ENCODE measurements at regions of chr5 and their contacts with region 1.

Region 1: GRCh38 chr5:39714036-39714698 is 289.4 kb upstream of the DAB2 start:
- DNase-seq: peak; percentile 3
- ATAC-seq: peak; percentile 63
- H3K4me3 ChIP-seq: no peak overlapping the region
- H3K27ac ChIP-seq: no peak overlapping the region
- H3K4me1 ChIP-seq: no peaks in the 10 kb centered on the region
- H3K27me3 ChIP-seq: no peaks in the 10 kb centered on the region
- CTCF ChIP-seq: peak; percentile 49 to 53 (median 52)
- EP300 ChIP-seq: no peak
- POLR2A ChIP-seq: no peak
- RAD21 ChIP-seq: peak; percentile 87

Region 2: GRCh38 chr5:39783756-39784421 is 69.7 kb after region 1 on chr5:
- CTCF ChIA-PET with region 1: no interaction called
- POLR2A ChIA-PET with region 1: no interaction called
- RAD21 ChIA-PET with region 1: no interaction called
- SMC1A ChIA-PET with region 1: no interaction called
- in situ Hi-C with region 1: no loop called
- intact Hi-C with region 1: no loop called
- DNase-seq: no peak
- ATAC-seq: no peak; the same call in 2 of the 3 replicates
- H3K4me3 ChIP-seq: no peak overlapping the region
- H3K27ac ChIP-seq: no peak overlapping the region
- H3K4me1 ChIP-seq: no peaks in the 10 kb centered on the region
- H3K27me3 ChIP-seq: no peaks in the 10 kb centered on the region
- CTCF ChIP-seq: no peak
- EP300 ChIP-seq: no peak
- POLR2A ChIP-seq: no peak
- RAD21 ChIP-seq: no peak

Region 3: GRCh38 chr5:39811381-39811780 is 97.2 kb after region 1 on chr5:
- CTCF ChIA-PET with region 1: no interaction called
- POLR2A ChIA-PET with region 1: no interaction called
- RAD21 ChIA-PET with region 1: no interaction called
- SMC1A ChIA-PET with region 1: no interaction called
- in situ Hi-C with region 1: no loop called
- intact Hi-C with region 1: no loop called
- DNase-seq: no peak
- ATAC-seq: no peak
- H3K4me3 ChIP-seq: no peak overlapping the region
- H3K27ac ChIP-seq: no peak overlapping the region
- H3K4me1 ChIP-seq: no peaks in the 10 kb centered on the region
- H3K27me3 ChIP-seq: no peaks in the 10 kb centered on the region
- CTCF ChIP-seq: no peak
- EP300 ChIP-seq: no peak
- POLR2A ChIP-seq: no peak
- RAD21 ChIP-seq: no peak

Region 4: DNA sequence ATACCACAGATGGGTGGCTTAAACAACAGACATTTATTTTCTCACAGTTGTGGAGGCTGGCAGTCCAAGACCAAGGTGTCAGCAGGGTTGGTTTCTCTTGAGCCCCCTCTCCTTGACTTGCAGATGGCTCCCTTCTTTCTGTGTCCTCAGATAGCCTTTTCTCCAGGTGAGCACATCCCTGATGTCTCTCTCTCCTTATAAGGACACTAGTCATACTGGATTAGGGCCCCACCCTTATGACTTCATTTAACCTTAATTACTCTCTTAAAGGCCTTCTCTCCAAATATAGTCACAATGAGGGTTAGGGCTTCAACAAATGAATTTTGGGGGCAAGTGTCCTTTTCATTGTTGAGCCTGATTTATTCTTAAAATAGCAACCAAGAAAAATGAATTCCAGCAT is 980.3 kb after region 1 on chr5:
- CTCF ChIA-PET with region 1: interaction called, 23 read pairs
- POLR2A ChIA-PET with region 1: no interaction called
- RAD21 ChIA-PET with region 1: interaction called, 7 read pairs
- SMC1A ChIA-PET with region 1: interaction called, 6 read pairs
- in situ Hi-C with region 1: loop called (anchors 10 kb)
- intact Hi-C with region 1: no loop called
- DNase-seq: no peak
- ATAC-seq: no peak
- H3K4me3 ChIP-seq: no peak overlapping the region
- H3K27ac ChIP-seq: no peak overlapping the region
- H3K4me1 ChIP-seq: no peaks in the 10 kb centered on the region
- H3K27me3 ChIP-seq: no peaks in the 10 kb centered on the region
- CTCF ChIP-seq: no peak
- EP300 ChIP-seq: no peak
- POLR2A ChIP-seq: no peak
- RAD21 ChIP-seq: no peak

Region 5: GRCh38 chr5:40736103-40736875 is 1022.1 kb after region 1 on chr5:
- CTCF ChIA-PET with region 1: interaction called, 7 read pairs
- POLR2A ChIA-PET with region 1: interaction called, 5 read pairs
- RAD21 ChIA-PET with region 1: no interaction called
- SMC1A ChIA-PET with region 1: no interaction called
- in situ Hi-C with region 1: no loop called
- intact Hi-C with region 1: loop called (anchors 5 kb)
- DNase-seq: peak; percentile 37
- ATAC-seq: peak; percentile 89
- H3K4me3 ChIP-seq: no peak overlapping the region
- H3K27ac ChIP-seq: no peak overlapping the region
- H3K4me1 ChIP-seq: no peaks in the 10 kb centered on the region
- H3K27me3 ChIP-seq: no peaks in the 10 kb centered on the region
- CTCF ChIP-seq: peak; percentile 62 to 76 (median 63)
- EP300 ChIP-seq: no peak
- POLR2A ChIP-seq: no peak
- RAD21 ChIP-seq: peak; percentile 78

Measured in GM12878 (cell line).